Activated CD4-positive, alpha-beta T cell treated with anti-CD3 and anti-CD28 coated beads for 36 hours (primary cell): ENCODE measurements at regions of chr16 and their contacts with region 1.

Region 1: GRCh38 chr16:8797364-8798173 is at the starts of genes PMM2 and TMEM186:
- DNase-seq: peak; percentile 97
- ATAC-seq: peak; percentile 96
- H3K4me3 Mint-ChIP-seq: peak within 1 kb of the TSS; percentile 91
- H3K27ac Mint-ChIP-seq: peak within 1 kb of the TSS; percentile 92
- H3K4me1 Mint-ChIP-seq: peaks cover 34% of the 10 kb centered on the region
- H3K27me3 Mint-ChIP-seq: no peaks in the 10 kb centered on the region
- total RNA-seq, gene PMM2: 38.3 to 39.0 TPM
- total RNA-seq, gene TMEM186: 9.4 to 14.5 TPM

Region 2: DNA sequence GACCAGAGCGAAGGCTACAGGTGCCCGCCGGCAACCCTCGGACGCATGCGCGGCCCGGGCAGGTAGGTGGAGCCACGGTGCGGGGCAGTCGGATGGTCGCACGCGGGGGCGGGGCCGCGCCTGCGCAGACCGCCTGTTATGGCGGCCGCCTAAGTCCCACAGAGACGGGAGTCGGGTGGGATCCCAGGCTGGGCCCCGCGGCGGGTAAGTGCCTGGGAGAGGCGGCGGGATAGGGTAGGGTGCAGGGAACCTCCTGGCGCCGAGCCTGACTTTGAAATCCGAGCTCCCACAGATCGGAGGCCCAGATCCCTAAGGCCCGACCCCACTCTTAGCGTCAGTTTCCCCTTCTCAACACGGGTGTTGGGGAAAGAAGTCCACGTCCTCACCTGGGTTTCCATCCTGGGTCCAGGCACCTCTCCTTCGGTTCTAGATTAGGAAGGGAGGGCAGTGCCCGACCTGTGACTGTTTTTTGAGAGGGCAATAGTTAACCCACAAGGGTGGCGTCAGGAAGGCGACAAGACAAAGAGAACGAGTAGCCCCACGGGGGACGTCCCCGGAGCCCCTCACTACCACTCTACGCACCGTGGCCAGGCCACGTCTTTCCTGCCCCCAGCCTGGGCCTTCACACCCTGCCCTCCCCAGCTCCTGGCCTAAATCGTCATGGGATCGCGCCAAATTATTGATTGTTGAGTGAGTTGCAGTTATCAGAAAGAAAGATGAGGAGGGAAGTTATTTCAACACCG is 175.8 kb before region 1 on chr16 and contains the start of gene METTL22:
- CTCF ChIA-PET with region 1: no interaction called
- POLR2A ChIA-PET with region 1: no interaction called
- intact Hi-C with region 1: loop called in 1 of 2 experiments (anchors 1 kb)
- DNase-seq: peak; percentile 96
- ATAC-seq: peak; percentile 98
- H3K4me3 Mint-ChIP-seq: peak within 1 kb of the TSS; percentile 91
- H3K27ac Mint-ChIP-seq: peak within 1 kb of the TSS; percentile 87
- H3K4me1 Mint-ChIP-seq: peaks cover 28% of the 10 kb centered on the region
- H3K27me3 Mint-ChIP-seq: peaks cover 3% of the 10 kb centered on the region
- total RNA-seq, gene METTL22: 32.3 to 45.8 TPM

Region 3: GRCh38 chr16:8660841-8661301 is 136.7 kb before region 1 on chr16:
- CTCF ChIA-PET with region 1: interaction called, 5 read pairs
- POLR2A ChIA-PET with region 1: no interaction called
- intact Hi-C with region 1: loop called (anchors 1 to 5 kb)
- DNase-seq: peak; percentile 84
- ATAC-seq: peak; percentile 88
- H3K4me3 Mint-ChIP-seq: no peak overlapping the region
- H3K27ac Mint-ChIP-seq: no peak overlapping the region
- H3K4me1 Mint-ChIP-seq: peaks cover 4% of the 10 kb centered on the region
- H3K27me3 Mint-ChIP-seq: no peaks in the 10 kb centered on the region

Region 4: GRCh38 chr16:8708536-8708935 is 89.0 kb before region 1 on chr16:
- CTCF ChIA-PET with region 1: no interaction called
- POLR2A ChIA-PET with region 1: interaction called, 10 read pairs
- intact Hi-C with region 1: no loop called
- DNase-seq: no peak
- ATAC-seq: no peak
- H3K4me3 Mint-ChIP-seq: no peak overlapping the region
- H3K27ac Mint-ChIP-seq: no peak overlapping the region
- H3K4me1 Mint-ChIP-seq: no peaks in the 10 kb centered on the region
- H3K27me3 Mint-ChIP-seq: no peaks in the 10 kb centered on the region

Region 5: GRCh38 chr16:8963825-8964441 is 166.4 kb after region 1 on chr16 and contains the start of gene USP7:
- CTCF ChIA-PET with region 1: no interaction called
- POLR2A ChIA-PET with region 1: no interaction called
- intact Hi-C with region 1: loop called in 1 of 2 experiments (anchors 1 kb)
- DNase-seq: peak; percentile 97
- ATAC-seq: peak; percentile 91
- H3K4me3 Mint-ChIP-seq: peak within 1 kb of the TSS; percentile 95
- H3K27ac Mint-ChIP-seq: peak within 1 kb of the TSS; percentile 94
- H3K4me1 Mint-ChIP-seq: peaks cover 34% of the 10 kb centered on the region
- H3K27me3 Mint-ChIP-seq: peaks cover 2% of the 10 kb centered on the region
- total RNA-seq, gene USP7: 165 to 198 TPM

Region 6: GRCh38 chr16:9447195-9447551 is 649.6 kb after region 1 on chr16:
- CTCF ChIA-PET with region 1: no interaction called
- POLR2A ChIA-PET with region 1: no interaction called
- intact Hi-C with region 1: no loop called
- DNase-seq: no peak
- ATAC-seq: no peak
- H3K4me3 Mint-ChIP-seq: no peak overlapping the region
- H3K27ac Mint-ChIP-seq: no peak overlapping the region
- H3K4me1 Mint-ChIP-seq: no peaks in the 10 kb centered on the region
- H3K27me3 Mint-ChIP-seq: no peaks in the 10 kb centered on the region

Region 7: GRCh38 chr16:10743610-10744393 is 1946.2 kb after region 1 on chr16 and contains the start of gene NUBP1:
- CTCF ChIA-PET with region 1: no interaction called
- POLR2A ChIA-PET with region 1: no interaction called
- intact Hi-C with region 1: loop called in 1 of 2 experiments (anchors 5 kb)
- DNase-seq: peak; percentile 100
- ATAC-seq: peak; percentile 95
- H3K4me3 Mint-ChIP-seq: peak within 1 kb of the TSS; percentile 75
- H3K27ac Mint-ChIP-seq: peak within 1 kb of the TSS; percentile 98
- H3K4me1 Mint-ChIP-seq: peaks cover 30% of the 10 kb centered on the region
- H3K27me3 Mint-ChIP-seq: no peaks in the 10 kb centered on the region
- total RNA-seq, gene NUBP1: 25.9 to 33.1 TPM